Naive thymus-derived CD4-positive, alpha-beta T cell (primary cell): ENCODE measurements at regions of chr11 and their contacts with region 1.

Region 1: GRCh38 chr11:82959987-82960778 is 58.6 kb downstream of the DDIAS start:
- DNase-seq: peak in 7 of 9 donors; percentile 71 to 89 (median 86)
- ATAC-seq: peak; percentile 92
- H3K4me3 ChIP-seq: peak overlapping the region; percentile 37
- H3K4me3 Mint-ChIP-seq: peak overlapping the region; percentile 52 to 88 (median 80)
- H3K27ac ChIP-seq: peak overlapping the region; percentile 74
- H3K27ac Mint-ChIP-seq: peak overlapping the region; percentile 84 to 99 (median 98)
- H3K4me1 ChIP-seq: peaks cover 49 to 82% of the 10 kb centered on the region in 2 donors
- H3K4me1 Mint-ChIP-seq: peaks cover 37 to 96% (median 90%) of the 10 kb centered on the region in 7 donors
- H3K27me3 ChIP-seq: no peaks in the 10 kb centered on the region
- H3K27me3 Mint-ChIP-seq: peaks cover 0 to 8% (median 0%) of the 10 kb centered on the region in 5 donors

Region 2: DNA sequence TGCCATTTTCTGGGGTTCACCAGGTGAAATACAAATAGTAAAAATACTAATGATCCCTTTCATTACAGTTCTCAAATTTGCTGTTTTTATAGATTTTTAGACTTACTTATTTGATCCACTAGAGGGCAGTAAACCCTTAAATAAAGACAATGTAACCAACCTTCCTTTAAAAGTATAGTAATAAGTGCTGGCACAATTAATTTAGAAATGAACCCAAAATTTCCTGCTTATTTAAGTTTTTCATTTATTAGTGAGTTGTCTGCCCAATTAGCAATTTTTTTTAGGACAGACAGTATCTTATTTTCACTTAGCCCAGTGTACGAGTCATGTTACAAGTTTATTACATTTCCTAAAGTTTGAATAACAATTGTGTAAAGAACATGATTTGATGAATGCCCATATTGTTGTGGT is 53.9 kb before region 1 on chr11:
- CTCF ChIA-PET with region 1: interaction called, 4 read pairs
- POLR2A ChIA-PET with region 1: interaction called, 48 read pairs
- intact Hi-C with region 1: loop called (anchors 1 kb)
- DNase-seq: peak in 6 of 9 donors; percentile 19 to 60 (median 48)
- ATAC-seq: no peak
- H3K4me3 ChIP-seq: no peak overlapping the region
- H3K4me3 Mint-ChIP-seq: peak overlapping the region in 4 of 10 donors; percentile 5 to 49 (median 20)
- H3K27ac ChIP-seq: no peak overlapping the region
- H3K27ac Mint-ChIP-seq: peak overlapping the region in 6 of 9 donors; percentile 27 to 70 (median 56)
- H3K4me1 ChIP-seq: peaks cover 6 to 18% of the 10 kb centered on the region in 2 donors
- H3K4me1 Mint-ChIP-seq: peaks cover 19 to 58% (median 31%) of the 10 kb centered on the region in 7 donors
- H3K27me3 ChIP-seq: no peaks in the 10 kb centered on the region
- H3K27me3 Mint-ChIP-seq: no peaks in the 10 kb centered on the region

Region 3: DNA sequence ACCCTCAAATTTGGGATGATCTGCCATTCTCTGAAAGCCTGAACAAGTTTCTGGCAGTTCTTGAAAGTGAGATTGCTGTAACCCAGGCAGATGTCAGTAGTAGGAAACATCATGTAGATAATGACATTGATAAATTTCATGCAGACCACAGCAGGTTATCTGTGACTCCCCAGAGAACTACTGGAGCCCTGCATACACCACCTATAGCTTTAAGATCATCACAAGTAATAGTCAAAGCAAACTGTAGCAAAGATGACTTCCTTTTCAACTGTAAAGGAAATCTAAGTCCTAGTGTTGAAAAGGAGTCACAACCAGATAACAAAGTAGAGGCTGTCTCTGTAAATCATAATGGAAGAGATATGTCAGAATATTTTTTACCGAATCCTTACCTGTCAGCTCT is 27.6 kb before region 1 on chr11:
- CTCF ChIA-PET with region 1: interaction called, 12 read pairs
- POLR2A ChIA-PET with region 1: interaction called, 27 read pairs
- intact Hi-C with region 1: loop called (anchors 1 kb)
- DNase-seq: peak in 2 of 9 donors; percentile 12 to 22
- ATAC-seq: no peak
- H3K4me3 ChIP-seq: no peak overlapping the region
- H3K4me3 Mint-ChIP-seq: peak overlapping the region in 7 of 10 donors; percentile 9 to 63 (median 36)
- H3K27ac ChIP-seq: no peak overlapping the region
- H3K27ac Mint-ChIP-seq: peak overlapping the region; percentile 18 to 86 (median 69)
- H3K4me1 ChIP-seq: peaks cover 0 to 23% of the 10 kb centered on the region in 2 donors
- H3K4me1 Mint-ChIP-seq: peaks cover 12 to 55% (median 42%) of the 10 kb centered on the region in 7 donors
- H3K27me3 ChIP-seq: no peaks in the 10 kb centered on the region
- H3K27me3 Mint-ChIP-seq: no peaks in the 10 kb centered on the region

Region 4: GRCh38 chr11:82988936-82989627 is 28.9 kb after region 1 on chr11:
- CTCF ChIA-PET with region 1: interaction called, 8 read pairs
- POLR2A ChIA-PET with region 1: interaction called, 3 read pairs
- intact Hi-C with region 1: loop called in 1 of 2 experiments (anchors 1 kb)
- DNase-seq: no peak
- ATAC-seq: no peak
- H3K4me3 ChIP-seq: no peak overlapping the region
- H3K4me3 Mint-ChIP-seq: peak overlapping the region in 1 of 10 donors; percentile 13
- H3K27ac ChIP-seq: no peak overlapping the region
- H3K27ac Mint-ChIP-seq: peak overlapping the region in 4 of 9 donors; percentile 22 to 69 (median 32)
- H3K4me1 ChIP-seq: peaks cover 0 to 4% of the 10 kb centered on the region in 2 donors
- H3K4me1 Mint-ChIP-seq: peaks cover 1 to 24% (median 15%) of the 10 kb centered on the region in 7 donors
- H3K27me3 ChIP-seq: no peaks in the 10 kb centered on the region
- H3K27me3 Mint-ChIP-seq: no peaks in the 10 kb centered on the region

Region 5: DNA sequence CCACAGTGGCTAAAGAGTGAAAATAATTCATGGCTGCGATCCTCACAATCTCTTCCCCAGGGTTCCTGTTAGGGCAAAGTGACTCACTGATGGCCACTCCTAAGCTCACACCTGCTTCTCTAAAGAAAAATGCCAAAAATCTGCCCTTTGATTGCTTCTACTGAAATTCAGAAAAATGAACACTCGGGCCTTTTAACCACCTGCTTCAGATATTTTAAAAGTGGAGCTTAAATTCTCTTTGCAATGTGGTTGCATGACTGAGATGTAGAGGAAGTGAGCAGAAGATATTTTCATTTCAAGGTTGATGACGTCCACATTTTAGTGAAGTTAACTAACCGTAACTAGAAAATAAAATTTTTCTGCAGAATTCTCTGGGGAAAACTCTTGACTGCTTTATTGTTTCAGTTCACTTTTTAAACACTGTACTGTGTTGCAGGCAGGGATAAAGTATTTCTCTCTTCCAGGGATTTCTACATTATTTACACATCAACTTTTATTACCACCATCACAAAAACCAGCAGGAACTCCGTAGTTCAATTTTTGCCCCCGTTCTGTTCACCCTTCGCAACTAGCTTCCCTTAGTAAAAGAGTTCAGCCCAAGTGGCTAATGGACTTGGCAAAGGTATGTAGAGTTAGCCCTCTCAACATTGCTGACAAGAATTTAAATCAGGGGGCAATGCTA is 103.0 kb after region 1 on chr11:
- CTCF ChIA-PET with region 1: no interaction called
- POLR2A ChIA-PET with region 1: interaction called, 40 read pairs
- intact Hi-C with region 1: loop called in 1 of 2 experiments (anchors 2 kb)
- DNase-seq: peak in 7 of 9 donors; percentile 19 to 60 (median 50)
- ATAC-seq: peak; percentile 78
- H3K4me3 ChIP-seq: peak overlapping the region; percentile 29
- H3K4me3 Mint-ChIP-seq: peak overlapping the region; percentile 72 to 92 (median 88)
- H3K27ac ChIP-seq: peak overlapping the region; percentile 71
- H3K27ac Mint-ChIP-seq: peak overlapping the region; percentile 90 to 99 (median 94)
- H3K4me1 ChIP-seq: peaks cover 0 to 25% of the 10 kb centered on the region in 2 donors
- H3K4me1 Mint-ChIP-seq: peaks cover 18 to 61% (median 55%) of the 10 kb centered on the region in 7 donors
- H3K27me3 ChIP-seq: no peaks in the 10 kb centered on the region
- H3K27me3 Mint-ChIP-seq: no peaks in the 10 kb centered on the region

Region 6: DNA sequence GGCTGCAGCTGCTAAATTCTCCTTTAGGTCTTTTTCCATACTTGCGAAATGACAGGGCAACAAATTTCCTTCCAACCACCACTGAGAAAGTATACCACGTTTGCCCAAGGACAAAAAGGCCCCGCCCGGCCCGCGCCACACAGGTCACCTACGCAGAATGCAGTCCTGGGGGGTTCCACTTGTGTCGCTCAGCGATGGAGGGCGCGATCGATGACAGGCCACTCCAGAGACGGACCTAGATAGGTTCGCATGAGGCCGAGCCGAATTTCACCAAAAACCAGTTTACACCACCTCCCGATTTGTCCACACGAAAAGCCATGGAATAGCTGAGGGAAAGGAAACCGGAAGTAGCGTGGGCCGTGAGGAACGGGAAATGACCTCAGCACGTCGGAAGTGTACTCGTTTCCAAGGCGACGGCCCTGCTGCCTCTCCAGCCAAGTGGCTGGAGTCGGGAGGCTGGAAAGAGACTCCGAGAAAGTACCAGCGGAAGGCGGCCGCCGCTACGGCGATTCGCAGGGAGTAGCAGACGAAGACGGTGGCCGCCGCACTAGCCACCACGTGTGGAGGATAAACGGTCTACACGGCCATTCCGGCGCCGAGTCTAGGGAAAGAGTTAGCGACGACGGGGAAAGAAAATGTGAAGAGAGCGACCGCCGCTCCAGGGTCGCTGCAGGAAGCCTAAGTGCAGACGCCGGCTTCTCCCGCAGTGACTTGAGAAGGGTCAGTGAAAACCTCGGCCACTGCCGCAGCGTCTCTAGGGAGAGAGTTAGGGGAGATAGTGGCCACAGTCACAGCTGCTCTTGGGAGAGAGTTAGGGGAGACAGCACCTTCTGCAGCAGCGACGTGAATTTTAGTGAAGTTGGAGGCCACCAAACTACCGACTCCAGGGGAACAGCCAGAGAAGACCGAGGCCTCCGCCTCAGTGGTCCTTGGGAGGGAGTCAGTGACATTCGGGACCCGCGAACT is 233.4 kb after region 1 on chr11 and contains the start of gene ANKRD42:
- CTCF ChIA-PET with region 1: no interaction called
- POLR2A ChIA-PET with region 1: interaction called, 3 read pairs
- intact Hi-C with region 1: loop called in 1 of 2 experiments (anchors 1 kb)
- DNase-seq: peak; percentile 66 to 90 (median 87)
- ATAC-seq: peak; percentile 84
- H3K4me3 ChIP-seq: peak within 1 kb of the TSS; percentile 89
- H3K4me3 Mint-ChIP-seq: peak within 1 kb of the TSS; percentile 92 to 100 (median 98)
- H3K27ac ChIP-seq: peak within 1 kb of the TSS; percentile 99
- H3K27ac Mint-ChIP-seq: peak within 1 kb of the TSS; percentile 96 to 100 (median 99)
- H3K4me1 ChIP-seq: peaks cover 22 to 29% of the 10 kb centered on the region in 2 donors
- H3K4me1 Mint-ChIP-seq: peaks cover 33 to 61% (median 50%) of the 10 kb centered on the region in 7 donors
- H3K27me3 ChIP-seq: no peaks in the 10 kb centered on the region
- H3K27me3 Mint-ChIP-seq: no peaks in the 10 kb centered on the region
- total RNA-seq, gene ANKRD42: 3.1 to 10.9 (median 7.0) TPM

Region 7: GRCh38 chr11:83326311-83326710 is 366.1 kb after region 1 on chr11:
- CTCF ChIA-PET with region 1: no interaction called
- POLR2A ChIA-PET with region 1: no interaction called
- intact Hi-C with region 1: no loop called
- DNase-seq: no peak
- ATAC-seq: no peak
- H3K4me3 ChIP-seq: no peak overlapping the region
- H3K4me3 Mint-ChIP-seq: no peak overlapping the region
- H3K27ac ChIP-seq: no peak overlapping the region
- H3K27ac Mint-ChIP-seq: no peak overlapping the region
- H3K4me1 ChIP-seq: no peaks in the 10 kb centered on the region
- H3K4me1 Mint-ChIP-seq: no peaks in the 10 kb centered on the region
- H3K27me3 ChIP-seq: peaks cover 0 to 4% of the 10 kb centered on the region in 2 donors
- H3K27me3 Mint-ChIP-seq: peaks cover 19 to 39% (median 34%) of the 10 kb centered on the region in 5 donors